GM10248 (cell line): ENCODE measurements at regions of chr10 and their contacts with region 1.

Region 1: GRCh38 chr10:70925377-70926225 is 37.2 kb upstream of the PCBD1 start:
- DNase-seq: peak; percentile 83
- CTCF ChIP-seq: peak; percentile 92

Region 2: DNA sequence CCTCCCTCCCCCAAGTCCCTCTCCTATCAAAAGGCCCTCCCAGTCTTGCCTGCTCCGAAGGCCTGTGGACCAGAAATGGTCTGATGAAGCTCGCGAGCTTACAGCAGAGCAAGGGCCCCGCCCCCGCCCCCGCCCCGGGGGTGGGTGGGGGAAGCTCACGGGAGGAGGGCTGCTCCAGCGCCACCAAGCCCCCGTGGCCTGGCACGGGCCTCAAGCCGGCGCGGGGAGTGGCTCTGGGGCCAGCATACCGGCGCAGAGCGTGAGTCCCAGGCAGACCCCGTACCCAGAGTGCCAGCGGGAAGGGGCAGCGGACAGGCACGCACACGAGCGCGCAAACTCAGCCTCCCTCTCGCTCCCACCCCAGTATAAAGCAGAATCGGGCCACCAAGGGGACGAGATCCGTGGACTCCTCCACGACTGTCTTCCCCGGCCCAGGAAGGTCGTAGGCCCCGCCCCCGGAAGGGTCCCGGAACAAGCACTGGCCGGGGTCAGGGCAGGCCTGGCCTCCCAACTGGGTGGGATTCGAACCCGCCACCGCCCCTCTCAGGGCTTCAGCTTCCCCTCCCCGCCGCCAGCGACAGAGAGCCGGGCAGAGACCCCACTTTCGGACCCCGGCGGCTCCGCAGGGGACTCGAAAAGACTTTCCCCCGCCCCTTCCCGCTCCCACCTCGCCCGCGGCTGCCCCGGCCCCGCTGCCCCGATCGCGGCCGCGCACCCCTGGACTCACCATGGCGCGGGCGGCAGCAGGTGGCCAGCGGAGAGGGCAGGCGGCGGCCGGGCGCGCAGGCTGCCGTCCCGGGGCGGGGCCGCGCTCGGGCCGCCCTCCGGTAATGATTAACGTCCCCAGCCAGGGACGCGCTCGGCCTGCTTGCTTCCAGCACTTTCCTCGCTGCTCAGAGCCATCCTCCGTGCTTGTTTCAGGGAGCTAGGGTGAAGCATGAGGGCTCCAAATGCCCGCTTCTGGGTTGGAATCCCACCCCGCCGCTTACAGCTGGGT is 37.5 kb before region 1 on chr10 and contains the start of gene PCBD1:
- CTCF ChIA-PET with region 1: interaction called, 12 read pairs
- POLR2A ChIA-PET with region 1: no interaction called
- DNase-seq: peak; percentile 87
- CTCF ChIP-seq: no peak

Region 3: DNA sequence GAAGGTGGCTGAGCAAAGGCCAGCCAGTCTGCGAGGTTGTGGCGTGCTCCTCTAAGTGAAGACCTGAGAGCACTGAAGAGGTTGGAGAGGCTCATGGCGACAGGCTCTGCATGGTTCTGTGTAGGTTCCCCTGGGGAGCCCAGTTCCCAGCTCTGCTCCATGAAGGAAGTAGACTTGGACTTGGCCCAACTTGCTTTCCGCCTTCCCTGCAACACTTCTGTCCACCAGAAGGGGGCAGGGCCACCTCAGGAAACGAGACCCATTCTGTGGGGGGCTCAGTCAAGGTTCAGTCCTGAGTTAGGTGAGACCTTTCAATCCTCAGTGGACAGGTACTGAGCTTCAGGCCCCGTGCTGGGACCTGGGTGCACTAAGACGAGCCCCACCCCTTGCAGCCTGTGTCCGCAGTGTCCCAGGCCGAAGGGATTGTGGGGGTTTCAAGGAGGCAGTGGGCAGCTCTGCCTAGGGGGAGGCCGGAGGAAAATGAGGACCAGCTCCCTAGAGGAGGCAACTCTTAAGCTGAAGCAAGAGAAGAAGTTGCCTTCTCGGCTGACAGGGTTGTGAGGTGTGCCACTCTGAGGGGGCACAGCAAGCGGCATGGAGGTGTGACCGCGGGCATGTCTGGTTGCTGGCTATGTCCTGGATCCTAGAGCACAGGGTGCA is 22.2 kb before region 1 on chr10:
- CTCF ChIA-PET with region 1: interaction called, 14 read pairs
- POLR2A ChIA-PET with region 1: no interaction called
- DNase-seq: peak; percentile 69
- CTCF ChIP-seq: peak; percentile 73

Region 4: DNA sequence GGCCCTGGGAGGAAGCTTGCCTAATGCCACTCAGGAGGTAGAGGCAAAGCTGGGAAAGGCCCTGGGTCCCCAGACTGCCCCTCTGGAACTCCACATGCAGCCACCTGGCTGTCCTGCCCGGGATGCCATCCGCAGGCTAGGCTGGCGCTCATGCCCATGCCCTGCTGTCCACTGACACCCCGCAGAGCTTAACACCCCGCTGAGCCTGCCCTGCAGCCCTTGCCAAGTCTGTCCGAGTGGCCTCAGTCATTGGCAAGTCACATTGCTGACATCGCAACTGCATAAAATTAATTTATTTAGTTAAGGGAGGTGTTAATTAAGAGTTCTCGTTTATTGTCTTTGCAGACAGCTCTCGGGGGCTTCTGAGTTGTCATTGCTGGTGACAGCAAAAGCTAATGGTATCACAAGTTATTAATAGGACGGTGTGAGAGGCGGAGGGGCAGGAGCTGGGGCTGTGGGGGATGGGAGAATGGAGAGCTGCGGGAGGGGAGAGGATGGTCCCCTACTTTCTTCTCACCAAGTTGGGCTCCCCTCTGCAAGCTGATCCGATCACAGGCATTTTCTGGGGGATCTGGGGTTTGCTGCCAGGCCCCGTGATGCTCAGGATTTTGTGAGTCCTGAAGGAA is 18.4 kb after region 1 on chr10:
- CTCF ChIA-PET with region 1: interaction called, 21 read pairs
- POLR2A ChIA-PET with region 1: no interaction called
- DNase-seq: no peak
- CTCF ChIP-seq: no peak

Region 5: DNA sequence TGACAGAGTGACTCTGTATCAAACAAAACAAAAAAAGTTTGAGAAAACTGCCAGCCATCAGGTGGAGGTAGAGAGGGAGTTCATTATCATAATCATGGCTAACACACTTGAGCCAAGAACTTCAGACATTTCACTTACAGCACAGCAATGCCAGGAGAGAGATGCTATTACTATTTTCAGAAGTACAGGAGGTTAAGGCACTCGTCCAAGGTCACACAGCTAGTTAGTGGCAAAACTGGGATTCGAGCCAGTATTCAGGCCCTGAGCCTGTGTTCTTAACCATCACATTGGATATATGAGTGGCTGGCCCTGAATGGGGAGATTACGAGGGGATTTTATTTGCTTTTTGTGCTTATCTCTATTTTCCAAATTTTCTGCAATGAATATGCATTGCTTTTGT is 262.0 kb after region 1 on chr10:
- CTCF ChIA-PET with region 1: interaction called, 11 read pairs
- POLR2A ChIA-PET with region 1: no interaction called
- DNase-seq: no peak
- CTCF ChIP-seq: no peak

Region 6: DNA sequence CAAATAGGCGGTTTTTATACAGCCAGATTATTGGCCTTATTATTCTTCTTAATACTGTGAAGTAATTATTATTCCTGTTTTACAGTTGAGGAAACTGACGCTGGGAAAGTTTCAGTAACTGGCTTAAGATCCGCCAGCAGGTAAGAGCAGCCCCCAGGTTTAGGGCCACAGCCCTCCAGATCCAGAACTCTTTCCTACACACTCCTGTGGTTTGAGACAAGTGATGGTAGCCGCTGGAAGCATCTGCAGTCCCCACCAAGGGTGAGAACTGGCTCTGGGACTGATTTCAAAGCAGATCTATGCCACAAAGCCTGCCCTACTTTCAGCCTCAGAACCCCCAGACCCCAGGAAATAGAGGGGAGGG is 283.7 kb after region 1 on chr10:
- CTCF ChIA-PET with region 1: interaction called, 32 read pairs
- POLR2A ChIA-PET with region 1: no interaction called
- DNase-seq: no peak
- CTCF ChIP-seq: no peak

Region 7: DNA sequence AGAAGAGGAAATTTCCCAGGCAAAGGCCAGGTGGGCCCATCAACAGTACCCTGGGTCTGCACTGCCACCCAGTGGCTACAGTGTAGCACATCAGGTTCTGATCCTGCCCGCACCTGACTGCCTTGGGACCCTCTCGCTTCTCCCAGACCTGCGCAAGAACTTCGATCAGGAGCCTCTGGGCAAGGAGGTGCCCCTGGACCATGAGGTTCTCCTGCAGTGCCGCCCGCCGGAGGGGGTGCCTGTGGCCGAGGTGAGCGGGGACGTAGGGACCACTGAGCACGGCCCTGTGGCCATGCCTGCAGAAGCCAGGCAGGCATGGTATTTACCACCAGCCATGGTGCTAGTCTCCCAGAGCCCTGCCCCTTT is 359.6 kb after region 1 on chr10:
- CTCF ChIA-PET with region 1: interaction called, 24 read pairs
- POLR2A ChIA-PET with region 1: no interaction called
- DNase-seq: peak; percentile 78
- CTCF ChIP-seq: peak; percentile 57